CD4-positive, alpha-beta T cell (primary cell): ENCODE measurements at regions of chr1 and their contacts with region 1.

Region 1: GRCh38 chr1:156282479-156283222 is at the start of gene SMG5:
- DNase-seq: peak; percentile 90 to 99 (median 94)
- ATAC-seq: peak; percentile 94
- H3K4me3 ChIP-seq: peak within 1 kb of the TSS; percentile 79
- H3K4me3 Mint-ChIP-seq: peak within 1 kb of the TSS; percentile 97
- H3K27ac ChIP-seq: peak within 1 kb of the TSS; percentile 82
- H3K27ac Mint-ChIP-seq: peak within 1 kb of the TSS; percentile 86
- H3K4me1 ChIP-seq: peaks cover 36% of the 10 kb centered on the region
- H3K4me1 Mint-ChIP-seq: peaks cover 47% of the 10 kb centered on the region
- H3K27me3 ChIP-seq: no peaks in the 10 kb centered on the region
- H3K27me3 Mint-ChIP-seq: no peaks in the 10 kb centered on the region
- CTCF ChIP-seq: no peak
- total RNA-seq, gene SMG5: 51.6 to 56.1 TPM

Region 2: DNA sequence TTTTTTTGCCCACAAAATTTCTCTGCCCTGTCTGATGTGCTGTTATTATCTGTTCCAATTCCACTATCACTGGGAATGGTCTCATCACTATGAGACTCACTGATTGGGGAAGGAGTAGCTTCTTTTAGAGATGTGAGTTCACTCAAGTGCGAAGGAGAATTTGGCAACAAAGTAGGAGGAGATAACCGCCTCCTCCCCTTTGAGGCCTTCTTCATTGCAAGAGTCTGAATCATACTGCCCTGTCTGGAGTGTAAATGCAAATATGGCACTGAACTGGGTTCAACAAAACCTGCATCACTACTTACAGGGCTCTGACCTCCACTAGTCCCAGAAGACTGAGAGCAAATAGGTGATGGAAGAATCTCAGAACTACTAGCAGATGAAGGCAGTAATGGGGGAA is 803.4 kb before region 1 on chr1:
- CTCF ChIA-PET with region 1: no interaction called
- POLR2A ChIA-PET with region 1: no interaction called
- intact Hi-C with region 1: no loop called
- DNase-seq: no peak
- ATAC-seq: no peak
- H3K4me3 ChIP-seq: no peak overlapping the region
- H3K4me3 Mint-ChIP-seq: no peak overlapping the region
- H3K27ac ChIP-seq: no peak overlapping the region
- H3K27ac Mint-ChIP-seq: no peak overlapping the region
- H3K4me1 ChIP-seq: no peaks in the 10 kb centered on the region
- H3K4me1 Mint-ChIP-seq: peaks cover 28% of the 10 kb centered on the region
- H3K27me3 ChIP-seq: no peaks in the 10 kb centered on the region
- H3K27me3 Mint-ChIP-seq: no peaks in the 10 kb centered on the region
- CTCF ChIP-seq: no peak

Region 3: GRCh38 chr1:156123356-156124196 is 159.1 kb before region 1 on chr1:
- CTCF ChIA-PET with region 1: no interaction called
- POLR2A ChIA-PET with region 1: no interaction called
- intact Hi-C with region 1: no loop called
- DNase-seq: peak in 13 of 14 experiments; percentile 61 to 89 (median 68)
- ATAC-seq: peak; percentile 19
- H3K4me3 ChIP-seq: no peak overlapping the region
- H3K4me3 Mint-ChIP-seq: peak overlapping the region; percentile 45
- H3K27ac ChIP-seq: no peak overlapping the region
- H3K27ac Mint-ChIP-seq: peak overlapping the region; percentile 77
- H3K4me1 ChIP-seq: peaks cover 88% of the 10 kb centered on the region
- H3K4me1 Mint-ChIP-seq: peaks cover 60% of the 10 kb centered on the region
- H3K27me3 ChIP-seq: no peaks in the 10 kb centered on the region
- H3K27me3 Mint-ChIP-seq: peaks cover 11% of the 10 kb centered on the region
- CTCF ChIP-seq: no peak

Region 4: GRCh38 chr1:156193488-156194299 is 89.0 kb before region 1 on chr1 and contains the start of gene SLC25A44:
- CTCF ChIA-PET with region 1: no interaction called
- POLR2A ChIA-PET with region 1: interaction called, 4 read pairs
- intact Hi-C with region 1: loop called in 1 of 2 experiments (anchors 5 kb)
- DNase-seq: peak; percentile 92 to 99 (median 97)
- ATAC-seq: peak; percentile 98
- H3K4me3 ChIP-seq: peak within 1 kb of the TSS; percentile 91
- H3K4me3 Mint-ChIP-seq: peak within 1 kb of the TSS; percentile 95
- H3K27ac ChIP-seq: peak within 1 kb of the TSS; percentile 74 to 78
- H3K27ac Mint-ChIP-seq: peak within 1 kb of the TSS; percentile 84
- H3K4me1 ChIP-seq: peaks cover 37% of the 10 kb centered on the region
- H3K4me1 Mint-ChIP-seq: peaks cover 39% of the 10 kb centered on the region
- H3K27me3 ChIP-seq: no peaks in the 10 kb centered on the region
- H3K27me3 Mint-ChIP-seq: no peaks in the 10 kb centered on the region
- CTCF ChIP-seq: peak; percentile 46
- total RNA-seq, gene SLC25A44: 11.6 to 13.0 TPM

Region 5: GRCh38 chr1:156270314-156270713 is 12.3 kb before region 1 on chr1:
- CTCF ChIA-PET with region 1: interaction called, 3 read pairs
- POLR2A ChIA-PET with region 1: interaction called, 24 read pairs
- intact Hi-C with region 1: no loop called
- DNase-seq: no peak
- ATAC-seq: no peak
- H3K4me3 ChIP-seq: no peak overlapping the region
- H3K4me3 Mint-ChIP-seq: no peak overlapping the region
- H3K27ac ChIP-seq: no peak overlapping the region
- H3K27ac Mint-ChIP-seq: no peak overlapping the region
- H3K4me1 ChIP-seq: no peaks in the 10 kb centered on the region
- H3K4me1 Mint-ChIP-seq: no peaks in the 10 kb centered on the region
- H3K27me3 ChIP-seq: no peaks in the 10 kb centered on the region
- H3K27me3 Mint-ChIP-seq: no peaks in the 10 kb centered on the region
- CTCF ChIP-seq: no peak

Region 6: DNA sequence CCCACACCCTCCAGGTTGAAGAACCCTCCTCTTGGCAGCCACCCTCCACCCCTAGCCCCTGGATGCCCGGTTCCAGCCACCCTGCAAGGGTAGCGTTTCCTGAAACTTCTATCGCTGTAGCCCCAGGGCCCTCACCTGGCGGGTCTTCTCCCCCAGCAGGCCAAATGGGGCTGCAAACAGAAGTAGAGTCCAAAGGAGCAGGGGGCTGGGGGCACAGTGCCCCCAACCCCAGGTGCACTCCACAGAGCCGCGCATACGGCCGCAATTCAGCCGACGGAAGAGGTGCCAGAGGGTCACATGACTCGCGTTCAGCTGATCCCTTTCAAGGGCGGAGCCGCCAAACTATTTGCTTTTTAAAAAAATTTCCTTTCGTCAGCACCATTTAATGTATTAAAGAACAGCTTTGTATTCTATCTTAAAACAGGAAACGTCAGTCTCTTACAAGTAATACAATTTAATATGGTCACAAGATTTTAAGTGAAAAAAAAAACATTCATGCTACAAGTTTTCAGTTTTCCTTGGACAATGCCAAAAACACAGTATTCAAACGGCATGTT is 12.8 kb after region 1 on chr1 and contains the start of gene GLMP:
- CTCF ChIA-PET with region 1: interaction called, 3 read pairs
- POLR2A ChIA-PET with region 1: interaction called, 37 read pairs
- intact Hi-C with region 1: no loop called
- DNase-seq: peak; percentile 27 to 79 (median 52)
- ATAC-seq: peak; percentile 93
- H3K4me3 ChIP-seq: peak within 1 kb of the TSS; percentile 79
- H3K4me3 Mint-ChIP-seq: peak within 1 kb of the TSS; percentile 89
- H3K27ac ChIP-seq: peak within 1 kb of the TSS in 1 of 2 donors; percentile 55
- H3K27ac Mint-ChIP-seq: peak within 1 kb of the TSS; percentile 80
- H3K4me1 ChIP-seq: peaks cover 19% of the 10 kb centered on the region
- H3K4me1 Mint-ChIP-seq: peaks cover 21% of the 10 kb centered on the region
- H3K27me3 ChIP-seq: no peaks in the 10 kb centered on the region
- H3K27me3 Mint-ChIP-seq: no peaks in the 10 kb centered on the region
- CTCF ChIP-seq: no peak
- total RNA-seq, gene GLMP: 12.3 to 16.1 TPM

Region 7: GRCh38 chr1:156338180-156338973 is 55.7 kb after region 1 on chr1 and contains the starts of genes CCT3 and TSACC:
- CTCF ChIA-PET with region 1: no interaction called
- POLR2A ChIA-PET with region 1: interaction called, 17 read pairs
- intact Hi-C with region 1: loop called in 1 of 2 experiments (anchors 1 kb)
- DNase-seq: peak; percentile 98 to 100 (median 99)
- ATAC-seq: peak; percentile 95
- H3K4me3 ChIP-seq: peak within 1 kb of the TSS; percentile 84
- H3K4me3 Mint-ChIP-seq: peak within 1 kb of the TSS; percentile 87
- H3K27ac ChIP-seq: peak within 1 kb of the TSS; percentile 79 to 96
- H3K27ac Mint-ChIP-seq: peak within 1 kb of the TSS; percentile 88
- H3K4me1 ChIP-seq: peaks cover 23% of the 10 kb centered on the region
- H3K4me1 Mint-ChIP-seq: peaks cover 41% of the 10 kb centered on the region
- H3K27me3 ChIP-seq: no peaks in the 10 kb centered on the region
- H3K27me3 Mint-ChIP-seq: no peaks in the 10 kb centered on the region
- CTCF ChIP-seq: no peak
- total RNA-seq, gene CCT3: 49.6 to 50.2 TPM
- total RNA-seq, gene TSACC: not detected

Region 8: GRCh38 chr1:156407344-156407743 is 124.7 kb after region 1 on chr1:
- CTCF ChIA-PET with region 1: no interaction called
- POLR2A ChIA-PET with region 1: no interaction called
- intact Hi-C with region 1: no loop called
- DNase-seq: no peak
- ATAC-seq: no peak
- H3K4me3 ChIP-seq: no peak overlapping the region
- H3K4me3 Mint-ChIP-seq: no peak overlapping the region
- H3K27ac ChIP-seq: no peak overlapping the region
- H3K27ac Mint-ChIP-seq: no peak overlapping the region
- H3K4me1 ChIP-seq: no peaks in the 10 kb centered on the region
- H3K4me1 Mint-ChIP-seq: no peaks in the 10 kb centered on the region
- H3K27me3 ChIP-seq: peaks cover 12 to 38% of the 10 kb centered on the region in 2 experiments
- H3K27me3 Mint-ChIP-seq: peaks cover 86% of the 10 kb centered on the region
- CTCF ChIP-seq: no peak

Region 9: DNA sequence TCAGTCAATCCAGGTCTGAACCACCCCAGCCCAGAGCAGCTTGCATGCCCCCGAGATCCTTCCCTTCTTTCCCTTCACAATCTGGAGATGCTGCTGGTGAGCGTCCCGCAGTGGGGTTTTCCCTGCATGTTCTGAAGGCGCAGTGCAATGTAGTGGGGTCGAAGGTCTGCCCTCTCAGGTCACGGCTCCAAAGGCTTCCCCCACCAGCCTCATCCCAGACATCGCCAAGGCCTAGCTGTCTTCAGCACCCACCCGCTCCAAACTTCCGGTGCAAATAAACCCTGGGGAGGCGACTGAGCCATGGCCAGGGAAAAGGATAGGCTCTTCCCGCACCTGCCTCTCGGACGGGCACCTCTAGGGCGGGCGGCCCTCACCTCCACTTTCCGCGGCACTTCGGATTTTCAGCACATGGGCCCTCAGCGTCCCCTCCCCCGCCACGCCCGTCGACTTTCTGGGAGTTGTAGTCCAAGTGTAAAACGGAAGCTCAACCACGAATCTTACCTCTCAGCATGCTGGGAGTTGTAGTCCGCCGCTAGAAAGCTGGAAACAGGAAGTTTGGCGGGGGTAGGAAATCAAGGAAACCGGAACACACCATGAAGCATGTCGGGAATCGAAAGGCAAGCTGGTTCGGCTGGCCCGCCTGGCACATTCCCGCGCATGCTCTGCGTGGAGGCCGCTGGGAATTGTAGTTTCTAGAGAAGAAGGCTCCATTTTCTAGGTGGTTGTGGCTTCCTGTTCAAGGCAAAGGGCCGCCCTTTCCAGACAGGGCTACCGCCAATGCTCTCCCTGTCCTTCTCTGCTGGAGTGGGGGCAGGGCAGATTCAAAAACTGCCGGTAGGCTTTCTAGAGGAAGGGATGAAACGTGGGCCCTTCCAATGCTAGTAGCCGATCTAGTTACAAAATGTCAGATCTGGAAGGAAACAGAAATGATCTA is 458.3 kb after region 1 on chr1 and contains the start of gene MRPL24:
- CTCF ChIA-PET with region 1: no interaction called
- POLR2A ChIA-PET with region 1: interaction called, 5 read pairs
- intact Hi-C with region 1: loop called in 1 of 2 experiments (anchors 5 kb)
- DNase-seq: peak; percentile 92 to 100 (median 96)
- ATAC-seq: peak; percentile 89
- H3K4me3 ChIP-seq: peak within 1 kb of the TSS; percentile 74
- H3K4me3 Mint-ChIP-seq: peak within 1 kb of the TSS; percentile 94
- H3K27ac ChIP-seq: peak within 1 kb of the TSS; percentile 82 to 86
- H3K27ac Mint-ChIP-seq: peak within 1 kb of the TSS; percentile 89
- H3K4me1 ChIP-seq: peaks cover 28% of the 10 kb centered on the region
- H3K4me1 Mint-ChIP-seq: peaks cover 40% of the 10 kb centered on the region
- H3K27me3 ChIP-seq: no peaks in the 10 kb centered on the region
- H3K27me3 Mint-ChIP-seq: no peaks in the 10 kb centered on the region
- CTCF ChIP-seq: no peak
- total RNA-seq, gene MRPL24: 11.7 to 11.9 TPM